AG04450 (cell line): ENCODE measurements at regions of chr18 and their contacts with region 1.

Region 1: DNA sequence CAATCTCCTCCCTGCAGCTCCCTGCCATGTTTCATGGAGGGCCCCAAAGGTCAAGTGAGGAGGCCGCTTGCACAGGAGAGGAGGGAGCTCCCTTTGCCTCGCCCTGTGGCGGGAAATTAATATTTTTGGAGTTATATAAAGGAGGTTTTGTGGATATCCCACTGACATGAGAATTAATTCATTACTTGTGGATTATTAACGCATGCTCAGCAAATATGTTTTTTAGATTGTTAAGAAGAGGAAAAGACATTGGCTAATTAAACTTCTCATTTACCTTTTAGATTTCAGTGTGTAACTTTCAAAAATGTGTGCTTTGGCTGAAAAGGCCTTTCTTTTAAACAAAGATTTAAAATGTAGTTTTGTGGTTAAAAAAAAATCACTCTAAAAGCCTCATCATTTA is 474.0 kb downstream of the SOCS6 start:
- DNase-seq: no peak
- H3K4me3 ChIP-seq: no peak overlapping the region
- H3K27ac ChIP-seq: no peak overlapping the region
- H3K27me3 ChIP-seq: no peaks in the 10 kb centered on the region
- CTCF ChIP-seq: no peak

Region 2: DNA sequence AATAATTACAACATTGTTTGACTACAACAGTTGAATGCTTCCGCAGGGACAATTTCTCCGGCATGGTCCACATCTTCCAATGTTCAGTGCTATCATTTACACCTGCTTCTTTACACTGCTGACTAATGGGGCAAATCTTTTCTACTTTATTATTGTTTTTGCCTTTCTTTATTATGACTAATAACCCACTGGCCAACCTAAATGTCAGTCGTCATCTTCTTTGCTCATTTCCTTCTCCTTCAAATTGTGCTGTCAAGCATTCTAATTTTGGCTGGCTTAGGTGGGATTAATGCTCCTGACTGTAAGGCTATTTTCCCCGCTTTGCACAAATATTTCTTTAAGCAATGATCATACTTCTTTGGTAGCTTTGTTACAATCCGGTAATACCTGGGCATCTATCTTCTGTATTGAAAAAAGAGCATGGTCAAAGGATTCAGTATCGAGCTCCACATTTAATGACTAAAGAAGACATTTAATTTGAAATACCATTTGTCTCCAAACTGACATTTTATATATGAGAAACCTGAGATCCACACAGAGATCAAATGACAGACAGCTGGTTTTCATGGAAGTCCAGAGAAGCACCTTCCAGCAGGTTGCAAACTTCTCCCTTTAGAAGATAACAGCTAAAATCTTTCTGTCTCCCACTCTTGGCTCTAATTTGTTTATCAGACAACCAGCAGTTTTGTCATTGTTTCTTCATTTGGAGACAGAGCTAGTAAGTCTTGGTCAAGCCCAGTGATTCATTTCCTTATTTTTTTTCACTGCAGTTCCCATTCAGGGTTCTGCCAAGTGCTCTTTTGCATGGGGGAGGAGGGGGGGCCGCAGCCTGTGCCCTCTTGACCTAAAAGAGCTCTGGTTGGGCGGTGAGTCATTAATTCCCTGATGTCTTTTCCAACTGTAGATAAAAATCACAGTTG is 341.1 kb before region 1 on chr18:
- CTCF ChIA-PET with region 1: no interaction called
- POLR2A ChIA-PET with region 1: no interaction called
- DNase-seq: peak; percentile 63
- H3K4me3 ChIP-seq: no peak overlapping the region
- H3K27ac ChIP-seq: no peak overlapping the region
- H3K27me3 ChIP-seq: no peaks in the 10 kb centered on the region
- CTCF ChIP-seq: no peak

Region 3: GRCh38 chr18:70781860-70782453 is 19.1 kb after region 1 on chr18:
- CTCF ChIA-PET with region 1: interaction called, 10 read pairs
- POLR2A ChIA-PET with region 1: no interaction called
- DNase-seq: peak; percentile 3
- H3K4me3 ChIP-seq: no peak overlapping the region
- H3K27ac ChIP-seq: no peak overlapping the region
- H3K27me3 ChIP-seq: no peaks in the 10 kb centered on the region
- CTCF ChIP-seq: peak; percentile 69